ENCODE measurements at regions of chr1 and their contacts with region 1.

Region 1: DNA sequence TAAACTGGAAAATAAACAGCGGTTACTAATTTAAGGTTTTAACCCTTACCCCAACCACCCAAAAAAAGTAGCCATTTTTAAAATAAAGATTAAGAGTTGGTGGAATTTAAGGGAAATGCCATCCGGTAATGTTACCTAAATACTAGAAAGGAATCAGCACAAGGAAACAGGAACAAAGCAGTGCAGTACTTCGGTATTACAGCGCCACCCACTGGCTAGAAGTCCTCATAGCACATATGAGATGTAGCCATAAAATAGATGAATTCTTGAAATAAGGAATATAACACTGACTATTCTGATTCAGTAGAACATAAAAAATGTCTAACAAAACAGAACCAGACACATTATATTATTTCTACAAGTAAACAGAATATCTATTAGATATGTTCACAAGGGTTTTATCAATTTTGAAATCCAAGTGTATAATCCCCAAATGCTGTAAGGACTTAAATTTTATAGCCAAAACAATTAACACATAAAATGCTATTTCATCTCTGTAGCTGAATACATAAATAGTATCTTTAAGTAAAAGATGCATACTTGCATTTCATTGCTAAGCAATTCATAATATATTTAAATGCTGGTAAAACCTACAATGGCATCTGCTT is 58.8 kb downstream of the FRRS1 start:
- DNase-seq: peak; percentile 8 to 71 (median 34)
- ATAC-seq: peak; percentile 57
- H3K4me3 ChIP-seq: no peak overlapping the region
- H3K4me3 Mint-ChIP-seq: no peak overlapping the region
- H3K27ac ChIP-seq: no peak overlapping the region
- H3K27ac Mint-ChIP-seq: no peak overlapping the region
- H3K4me1 ChIP-seq: peaks cover 13% of the 10 kb centered on the region
- H3K4me1 Mint-ChIP-seq: peaks cover 9% of the 10 kb centered on the region
- H3K27me3 ChIP-seq: no peaks in the 10 kb centered on the region
- H3K27me3 Mint-ChIP-seq: no peaks in the 10 kb centered on the region
- CTCF ChIP-seq: peak; percentile 73

Region 2: GRCh38 chr1:98749152-98749756 is 958.4 kb before region 1 on chr1:
- CTCF ChIA-PET with region 1: no interaction called
- POLR2A ChIA-PET with region 1: no interaction called
- intact Hi-C with region 1: loop called (anchors 1 to 5 kb)
- DNase-seq: peak in 3 of 14 experiments; percentile 33 to 37 (median 36)
- ATAC-seq: no peak
- H3K4me3 ChIP-seq: no peak overlapping the region
- H3K4me3 Mint-ChIP-seq: no peak overlapping the region
- H3K27ac ChIP-seq: no peak overlapping the region
- H3K27ac Mint-ChIP-seq: no peak overlapping the region
- H3K4me1 ChIP-seq: no peaks in the 10 kb centered on the region
- H3K4me1 Mint-ChIP-seq: no peaks in the 10 kb centered on the region
- H3K27me3 ChIP-seq: no peaks in the 10 kb centered on the region
- H3K27me3 Mint-ChIP-seq: peaks cover 5% of the 10 kb centered on the region
- CTCF ChIP-seq: peak; percentile 59

Region 3: DNA sequence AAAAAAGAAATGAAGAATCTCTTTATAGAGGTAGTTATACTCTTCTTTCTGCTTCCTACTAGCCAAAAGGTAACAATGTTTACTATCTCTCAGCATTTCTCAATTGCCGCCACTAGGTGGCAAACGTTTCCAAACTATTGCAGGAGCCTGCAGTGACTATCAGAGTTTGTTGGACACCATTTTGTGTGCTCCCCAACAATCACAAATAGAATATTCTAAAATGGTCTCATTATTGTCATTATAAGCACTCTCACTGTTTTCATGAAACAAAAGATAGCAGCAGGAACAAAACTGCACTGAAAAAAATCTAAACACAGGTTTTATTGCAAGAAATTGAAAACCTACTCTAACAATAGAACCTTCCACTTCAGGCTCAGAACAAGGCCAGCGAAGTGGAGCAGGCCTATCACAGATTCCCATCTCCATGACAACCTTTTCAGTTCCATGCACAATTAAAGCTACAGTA is 527.3 kb before region 1 on chr1:
- CTCF ChIA-PET with region 1: no interaction called
- POLR2A ChIA-PET with region 1: no interaction called
- intact Hi-C with region 1: loop called in 1 of 2 experiments (anchors 5 kb)
- DNase-seq: peak; percentile 21 to 77 (median 43)
- ATAC-seq: peak; percentile 80
- H3K4me3 ChIP-seq: no peak overlapping the region
- H3K4me3 Mint-ChIP-seq: no peak overlapping the region
- H3K27ac ChIP-seq: no peak overlapping the region
- H3K27ac Mint-ChIP-seq: no peak overlapping the region
- H3K4me1 ChIP-seq: no peaks in the 10 kb centered on the region
- H3K4me1 Mint-ChIP-seq: no peaks in the 10 kb centered on the region
- H3K27me3 ChIP-seq: no peaks in the 10 kb centered on the region
- H3K27me3 Mint-ChIP-seq: no peaks in the 10 kb centered on the region
- CTCF ChIP-seq: peak; percentile 90

Region 4: DNA sequence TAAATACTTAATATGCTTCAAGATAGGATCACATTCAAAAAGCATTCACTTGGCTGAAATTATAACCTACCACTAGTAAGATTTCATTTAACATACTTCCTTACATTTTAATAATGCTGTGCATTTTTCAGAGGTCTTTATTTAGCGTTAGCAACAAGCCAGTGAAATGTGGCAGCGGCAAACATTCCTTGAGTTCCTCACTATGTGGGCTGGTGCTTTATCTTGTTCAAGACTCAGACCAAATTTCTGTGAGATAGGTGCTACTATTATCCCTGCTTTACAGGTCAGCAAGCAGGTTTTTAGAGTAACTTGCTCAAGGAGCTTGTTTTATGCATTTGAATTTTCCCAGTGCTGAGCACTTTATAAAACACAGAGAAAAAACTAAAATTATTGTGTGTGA is 310.6 kb before region 1 on chr1:
- CTCF ChIA-PET with region 1: no interaction called
- POLR2A ChIA-PET with region 1: no interaction called
- intact Hi-C with region 1: no loop called
- DNase-seq: no peak
- ATAC-seq: no peak
- H3K4me3 ChIP-seq: no peak overlapping the region
- H3K4me3 Mint-ChIP-seq: no peak overlapping the region
- H3K27ac ChIP-seq: no peak overlapping the region
- H3K27ac Mint-ChIP-seq: no peak overlapping the region
- H3K4me1 ChIP-seq: no peaks in the 10 kb centered on the region
- H3K4me1 Mint-ChIP-seq: no peaks in the 10 kb centered on the region
- H3K27me3 ChIP-seq: no peaks in the 10 kb centered on the region
- H3K27me3 Mint-ChIP-seq: no peaks in the 10 kb centered on the region
- CTCF ChIP-seq: no peak